ENCODE measurements at regions of chr1 and their contacts with region 1.

Region 1: DNA sequence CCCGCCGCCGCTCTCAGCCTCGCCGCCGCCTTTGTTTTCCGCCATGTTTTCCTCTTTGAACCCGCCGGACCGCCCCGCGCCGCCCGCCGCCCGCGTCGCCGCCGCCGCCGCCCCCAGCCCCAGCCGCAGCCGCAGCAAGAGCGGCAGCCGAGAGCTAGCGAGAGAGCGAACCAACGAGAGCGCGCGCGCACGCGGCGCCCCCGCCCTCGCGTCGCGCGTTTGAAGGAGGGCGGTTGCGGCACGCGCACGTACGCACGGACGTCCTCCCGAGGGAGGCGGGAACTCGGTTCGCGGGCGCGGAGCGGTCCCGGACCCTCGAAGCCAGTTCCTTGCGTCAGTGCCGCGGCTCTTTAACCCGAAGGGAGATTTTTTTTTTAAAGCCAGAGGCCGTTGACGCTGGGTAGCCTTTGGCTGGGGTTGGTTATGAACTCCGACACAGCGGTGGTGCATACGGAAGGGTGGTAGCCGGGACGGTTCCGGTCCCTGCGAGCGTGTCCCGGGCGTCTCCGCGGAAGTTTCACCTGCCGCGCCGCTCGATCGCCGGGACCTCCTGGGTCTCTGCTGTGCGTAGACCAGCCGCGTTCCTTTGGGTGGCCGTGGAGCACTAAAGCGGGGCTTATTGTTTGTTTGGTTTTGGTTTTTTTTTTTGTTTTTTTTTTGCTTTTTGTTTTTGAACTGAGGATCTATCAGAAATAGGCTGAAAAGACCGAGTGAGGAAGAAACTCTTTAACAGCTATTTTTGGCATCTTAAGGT is at the start of gene TRIM33:
- DNase-seq: peak; percentile 95

Region 2: GRCh38 chr1:114270282-114270681 is 240.9 kb before region 1 on chr1:
- CTCF ChIA-PET with region 1: no interaction called
- POLR2A ChIA-PET with region 1: no interaction called
- DNase-seq: no peak

Region 3: GRCh38 chr1:114490274-114490693 is 20.9 kb before region 1 on chr1:
- CTCF ChIA-PET with region 1: no interaction called
- POLR2A ChIA-PET with region 1: no interaction called
- DNase-seq: no peak

Region 4: GRCh38 chr1:114524935-114525334 is 13.7 kb after region 1 on chr1:
- CTCF ChIA-PET with region 1: interaction called, 5 read pairs
- POLR2A ChIA-PET with region 1: interaction called, 19 read pairs
- DNase-seq: peak; percentile 35

Region 5: GRCh38 chr1:114648502-114648901 is 137.3 kb after region 1 on chr1:
- CTCF ChIA-PET with region 1: no interaction called
- POLR2A ChIA-PET with region 1: no interaction called
- DNase-seq: no peak

Measured in HEK293T (cell line).